ENCODE measurements at regions of chr22 and their contacts with region 1.

Region 1: DNA sequence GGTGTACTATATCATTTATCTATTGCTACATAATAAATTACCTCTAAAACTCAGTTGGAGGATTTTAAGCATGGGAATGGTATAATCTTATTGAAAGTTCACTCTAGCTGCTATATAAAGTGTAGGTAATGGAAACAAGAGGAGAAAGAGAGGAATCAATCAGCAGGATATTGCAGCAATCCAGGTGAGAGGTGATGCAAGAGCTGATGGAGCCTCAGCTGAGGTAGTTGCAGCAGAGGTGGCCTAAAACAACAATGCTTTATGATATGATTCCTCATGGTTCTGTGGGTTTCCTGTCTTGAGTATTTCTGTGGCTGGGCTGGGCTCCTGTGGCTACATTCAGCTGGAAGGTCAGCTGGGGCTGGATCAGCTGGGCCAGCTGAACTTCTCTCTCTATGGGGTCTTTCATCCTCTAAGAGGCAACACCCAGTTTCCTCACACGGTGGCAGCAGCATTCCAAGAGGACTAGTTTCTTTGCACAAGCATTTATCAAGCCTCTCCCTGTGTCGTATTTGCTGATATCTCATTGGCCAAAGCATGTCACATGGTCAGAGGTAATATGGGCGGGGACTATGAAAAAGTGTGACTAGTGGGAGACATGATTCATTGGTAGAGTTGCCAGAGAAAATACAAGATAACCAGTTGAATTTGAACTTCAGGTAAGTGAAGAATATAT is 135.4 kb upstream of the LARGE1 start:
- DNase-seq: peak; percentile 21
- ATAC-seq: no peak

Region 2: DNA sequence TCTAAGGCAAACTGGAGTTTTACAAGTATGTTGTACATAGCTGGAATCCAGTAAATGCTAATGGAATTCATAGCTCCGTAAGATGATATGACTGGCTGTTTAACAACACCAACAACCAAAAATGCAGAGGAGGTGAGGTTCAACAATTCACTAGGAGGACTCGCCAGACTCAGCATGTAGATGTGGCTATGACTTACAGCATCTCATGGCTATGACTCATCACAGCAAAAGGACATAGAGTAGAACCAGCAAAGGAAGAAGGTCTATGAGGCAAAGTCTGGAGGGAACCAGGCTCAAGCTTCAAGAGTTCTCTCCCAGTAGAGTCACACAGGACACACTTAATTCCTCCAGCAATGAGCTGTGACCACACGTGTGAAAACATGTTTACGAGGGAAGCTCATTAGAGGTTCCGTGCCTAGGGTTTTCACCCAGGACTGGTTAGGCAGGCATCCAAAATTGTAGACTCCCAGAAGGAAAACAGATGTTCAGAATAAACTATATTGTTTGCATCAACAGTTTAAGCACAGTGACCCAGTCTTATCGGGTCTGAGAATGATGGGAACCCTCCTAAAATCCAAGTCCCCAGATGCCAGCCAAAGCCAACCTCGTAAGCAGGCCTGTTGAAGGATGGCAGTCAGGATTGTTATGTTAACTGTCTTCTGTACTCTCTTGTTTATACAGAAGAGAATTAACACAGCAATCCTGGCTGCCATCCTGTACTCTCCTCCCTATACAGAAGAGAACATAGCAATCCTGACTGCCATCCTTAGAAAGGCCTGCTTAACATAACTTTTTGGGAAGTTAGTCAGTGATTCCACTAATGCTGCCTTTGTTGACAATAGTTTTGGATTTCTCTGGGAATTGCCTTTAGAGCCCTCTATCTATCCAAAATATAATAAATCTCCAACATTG is 252.0 kb before region 1 on chr22:
- intact Hi-C with region 1: no loop called
- DNase-seq: no peak
- ATAC-seq: peak in 1 of 2 donors; percentile 90

Region 3: GRCh38 chr22:33867115-33867866 is 188.4 kb before region 1 on chr22:
- intact Hi-C with region 1: no loop called
- DNase-seq: no peak
- ATAC-seq: peak in 1 of 2 donors; percentile 58

Region 4: GRCh38 chr22:34017205-34017604 is 38.5 kb before region 1 on chr22:
- intact Hi-C with region 1: no loop called
- DNase-seq: no peak
- ATAC-seq: no peak

Region 5: DNA sequence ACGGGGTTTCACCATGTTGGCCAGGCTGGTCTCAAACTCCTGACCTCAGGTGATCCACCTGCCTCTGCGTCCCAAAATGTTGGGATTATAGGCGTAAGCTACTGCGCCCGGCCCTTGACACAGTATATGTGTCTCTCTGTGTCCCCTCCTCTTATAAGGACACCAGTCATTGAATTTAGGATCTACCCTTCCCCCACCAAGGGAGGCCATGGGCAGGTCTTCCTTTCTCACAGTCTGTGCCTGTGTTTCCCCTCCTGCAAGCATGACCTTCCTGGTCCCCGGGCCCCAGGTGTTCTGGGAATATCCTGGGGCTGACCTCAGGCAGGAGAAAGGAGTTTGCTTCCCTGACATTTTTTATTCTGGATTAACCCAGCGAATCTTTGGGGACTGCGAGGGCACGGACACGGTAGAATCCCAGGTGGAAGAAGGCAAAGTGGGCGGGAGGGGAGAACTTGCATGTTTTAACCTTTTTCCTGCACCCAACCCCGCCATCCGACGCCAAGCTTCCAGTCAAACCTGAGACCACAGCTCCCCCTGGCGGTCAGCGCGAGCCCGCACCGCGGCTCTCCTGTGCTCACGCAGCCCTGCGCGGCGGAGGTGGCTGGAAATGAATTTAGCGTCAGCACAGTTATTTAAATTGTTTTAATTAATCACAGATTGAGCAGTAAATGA is 968.2 kb after region 1 on chr22:
- intact Hi-C with region 1: loop called in 1 of 2 experiments (anchors 10 kb)
- DNase-seq: peak; percentile 68
- ATAC-seq: peak; percentile 57 to 70